ENCODE measurements at regions of chr13 and their contacts with region 1.

Region 1: GRCh38 chr13:95301183-95301967 is at the start of gene ABCC4:
- DNase-seq: peak in 1 of 2 experiments; percentile 76
- H3K4me3 ChIP-seq: peak within 1 kb of the TSS; percentile 59
- H3K27ac ChIP-seq: no peak within 1 kb of the TSS; the same call in 1 of the 2 replicates
- H3K4me1 ChIP-seq: peaks cover 24% of the 10 kb centered on the region
- H3K27me3 ChIP-seq: no peaks in the 10 kb centered on the region
- CTCF ChIP-seq: no peak
- total RNA-seq, gene ABCC4: 17.0 and 18.6 TPM in 2 replicates

Region 2: DNA sequence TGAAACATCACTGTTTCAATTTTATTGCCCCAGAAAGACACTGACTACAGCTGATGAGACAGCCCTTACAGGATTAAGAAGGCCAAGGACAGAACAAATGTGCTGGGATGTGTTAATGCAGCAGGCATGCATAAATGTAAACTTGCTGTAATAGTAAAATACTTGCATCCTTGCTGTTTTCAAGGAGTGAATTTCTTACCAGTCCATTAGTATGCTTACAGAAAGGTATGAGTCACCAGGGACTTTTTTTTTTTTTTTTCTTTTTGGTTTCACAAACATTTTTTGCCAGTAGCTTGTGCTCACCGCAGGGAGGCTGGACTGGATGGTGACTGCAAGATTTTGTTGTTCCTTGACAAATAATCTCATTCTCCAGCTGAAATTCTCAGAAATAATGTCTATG is 644.6 kb before region 1 on chr13:
- CTCF ChIA-PET with region 1: no interaction called
- POLR2A ChIA-PET with region 1: interaction called, 25 read pairs
- intact Hi-C with region 1: no loop called
- DNase-seq: peak in 1 of 2 experiments; percentile 66
- H3K4me3 ChIP-seq: no peak overlapping the region
- H3K27ac ChIP-seq: no peak overlapping the region
- H3K4me1 ChIP-seq: no peaks in the 10 kb centered on the region
- H3K27me3 ChIP-seq: peaks cover 7% of the 10 kb centered on the region
- CTCF ChIP-seq: no peak

Region 3: GRCh38 chr13:95191821-95192563 is 109.4 kb before region 1 on chr13:
- CTCF ChIA-PET with region 1: no interaction called
- POLR2A ChIA-PET with region 1: no interaction called
- intact Hi-C with region 1: loop called (anchors 1 kb)
- DNase-seq: peak; percentile 67 to 78
- H3K4me3 ChIP-seq: no peak overlapping the region
- H3K27ac ChIP-seq: no peak overlapping the region
- H3K4me1 ChIP-seq: no peaks in the 10 kb centered on the region
- H3K27me3 ChIP-seq: no peaks in the 10 kb centered on the region
- CTCF ChIP-seq: peak; percentile 96

Region 4: DNA sequence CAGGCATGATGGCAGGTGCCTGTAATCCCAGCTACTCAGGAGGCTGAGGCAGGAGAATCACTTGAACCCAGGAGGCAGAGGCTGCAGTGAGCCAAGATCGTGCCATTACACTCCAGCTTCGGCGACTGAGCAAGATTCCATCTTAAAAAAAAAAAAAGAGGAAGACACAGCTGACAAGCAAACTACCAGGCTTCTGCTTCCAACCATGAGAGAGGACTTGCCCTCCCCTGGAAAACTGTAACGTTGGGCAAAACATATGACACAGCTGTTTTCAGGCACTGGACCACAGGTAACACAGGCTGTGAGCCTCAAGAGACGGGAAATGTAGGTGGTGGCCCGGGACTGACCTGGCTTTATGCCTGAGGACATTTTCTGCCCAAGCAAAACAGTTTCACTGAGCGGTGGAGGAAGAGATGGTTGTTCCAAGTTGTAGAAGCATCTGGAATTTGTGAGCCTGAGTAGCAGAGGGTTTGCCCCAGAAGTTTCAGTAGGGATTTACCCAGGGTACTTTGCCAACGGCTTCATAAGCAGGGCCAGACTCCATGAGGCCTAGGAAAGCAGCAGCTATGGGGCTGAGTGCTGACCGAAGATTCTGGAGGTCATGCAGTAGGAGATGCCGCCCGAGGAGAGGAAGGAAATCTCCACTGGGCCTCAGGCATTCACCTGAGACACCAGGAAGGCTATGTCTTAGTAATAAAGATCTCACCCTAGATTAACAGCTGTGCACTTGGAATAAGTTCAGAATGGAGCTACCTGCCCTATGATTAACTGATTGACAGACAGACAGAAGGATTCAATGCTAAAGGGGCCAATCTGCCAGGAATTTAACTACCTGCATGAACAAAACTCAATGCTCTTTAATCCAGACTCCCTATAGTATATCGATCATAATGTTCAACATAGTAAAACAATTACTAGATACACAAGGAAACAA is 88.1 kb before region 1 on chr13:
- CTCF ChIA-PET with region 1: no interaction called
- POLR2A ChIA-PET with region 1: no interaction called
- intact Hi-C with region 1: loop called (anchors 1 kb)
- DNase-seq: peak; percentile 49 to 91
- H3K4me3 ChIP-seq: no peak overlapping the region
- H3K27ac ChIP-seq: peak overlapping the region; percentile 42
- H3K4me1 ChIP-seq: peaks cover 43% of the 10 kb centered on the region
- H3K27me3 ChIP-seq: no peaks in the 10 kb centered on the region
- CTCF ChIP-seq: no peak

Region 5: DNA sequence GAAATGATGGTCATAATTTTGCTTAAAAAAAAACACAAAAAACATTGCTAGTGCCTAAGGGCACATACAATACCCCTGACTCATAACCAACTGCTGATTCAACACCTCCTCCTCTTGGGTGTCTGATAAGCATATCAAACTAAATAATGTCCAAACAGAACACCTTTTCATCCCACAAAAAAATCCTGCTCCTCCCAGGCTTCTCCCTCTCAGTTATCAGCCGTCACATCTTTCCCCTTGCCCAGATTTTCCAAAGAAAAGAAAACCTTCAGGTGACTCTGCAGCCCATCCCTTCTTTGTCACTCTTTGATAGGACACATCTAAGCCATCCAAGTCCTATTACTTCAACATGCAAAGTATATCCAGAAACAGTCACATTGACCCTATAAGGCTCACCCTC is 47.0 kb before region 1 on chr13:
- CTCF ChIA-PET with region 1: no interaction called
- POLR2A ChIA-PET with region 1: no interaction called
- intact Hi-C with region 1: loop called (anchors 1 kb)
- DNase-seq: peak; percentile 51 to 78
- H3K4me3 ChIP-seq: no peak overlapping the region
- H3K27ac ChIP-seq: peak overlapping the region; percentile 70
- H3K4me1 ChIP-seq: peaks cover 46% of the 10 kb centered on the region
- H3K27me3 ChIP-seq: no peaks in the 10 kb centered on the region
- CTCF ChIP-seq: no peak

Region 6: DNA sequence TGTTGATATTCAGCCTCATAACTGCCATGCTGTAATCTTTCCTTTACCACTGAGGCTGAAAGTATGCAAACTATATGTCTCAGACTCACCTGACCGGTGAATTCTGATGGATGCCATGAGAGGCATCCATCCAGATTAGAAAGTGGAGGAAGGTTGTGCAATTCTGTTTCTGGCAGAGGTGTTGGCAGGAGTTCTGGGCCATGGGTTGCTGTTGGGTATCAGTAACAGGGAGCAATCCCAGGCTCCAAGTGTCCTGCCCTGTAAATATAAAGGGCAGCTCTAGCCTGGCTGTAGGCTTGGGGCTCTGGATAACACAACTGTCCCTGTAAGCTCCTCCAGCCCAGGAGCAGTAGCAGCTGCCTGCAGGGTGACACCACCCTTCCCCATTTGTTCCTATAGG is 77.2 kb after region 1 on chr13:
- CTCF ChIA-PET with region 1: interaction called, 11 read pairs
- POLR2A ChIA-PET with region 1: no interaction called
- intact Hi-C with region 1: loop called (anchors 1 kb)
- DNase-seq: peak in 1 of 2 experiments; percentile 80
- H3K4me3 ChIP-seq: no peak overlapping the region
- H3K27ac ChIP-seq: no peak overlapping the region
- H3K4me1 ChIP-seq: peaks cover 29% of the 10 kb centered on the region
- H3K27me3 ChIP-seq: no peaks in the 10 kb centered on the region
- CTCF ChIP-seq: no peak

Region 7: GRCh38 chr13:95403828-95404522 is 102.6 kb after region 1 on chr13:
- CTCF ChIA-PET with region 1: interaction called, 4 read pairs
- POLR2A ChIA-PET with region 1: no interaction called
- intact Hi-C with region 1: loop called (anchors 2 kb)
- DNase-seq: peak; percentile 82 to 83
- H3K4me3 ChIP-seq: no peak overlapping the region
- H3K27ac ChIP-seq: no peak overlapping the region
- H3K4me1 ChIP-seq: peaks cover 8% of the 10 kb centered on the region
- H3K27me3 ChIP-seq: no peaks in the 10 kb centered on the region
- CTCF ChIP-seq: peak; percentile 98

Measured in PC-9 (cell line).